IMR-90 (cell line): ENCODE measurements at regions of chr12 and their contacts with region 1.

Region 1: DNA sequence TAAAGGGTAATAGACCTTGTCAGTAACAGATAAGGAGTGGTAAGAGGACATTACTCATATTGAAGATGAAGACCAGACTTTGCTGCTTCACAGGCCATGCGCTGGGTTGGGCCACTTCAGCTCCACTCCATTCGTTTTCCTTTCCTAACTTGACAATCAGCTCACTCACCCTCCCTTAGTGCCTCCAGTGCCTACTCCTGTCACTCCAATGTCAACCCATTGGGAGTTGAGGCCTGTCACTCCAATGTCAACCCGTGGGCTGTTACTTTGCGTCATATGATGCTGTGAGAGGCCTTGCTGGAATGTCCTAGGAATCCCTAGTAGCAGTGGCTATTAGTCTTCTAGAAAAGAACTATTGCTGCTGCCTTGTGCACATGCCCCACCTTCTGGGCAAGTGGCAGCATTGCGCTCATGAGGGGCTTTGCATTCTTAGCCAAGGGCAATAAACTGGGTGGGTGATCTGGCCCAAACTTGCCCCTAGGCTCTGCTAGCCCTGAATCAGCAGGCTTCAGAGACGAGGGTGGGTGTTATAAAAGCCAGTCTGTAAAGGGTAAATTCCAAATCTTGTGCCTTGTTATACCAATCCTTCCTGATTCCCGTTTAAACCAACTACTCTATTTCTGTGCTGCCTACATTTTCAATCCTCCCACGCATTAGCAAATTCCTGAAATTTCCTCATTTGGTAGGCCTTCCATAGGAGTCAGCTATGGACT is 36.1 kb downstream of the BAZ2A start:
- DNase-seq: peak; percentile 81
- ATAC-seq: peak; percentile 81
- H3K4me3 ChIP-seq: no peak overlapping the region
- H3K27ac ChIP-seq: peak overlapping the region; percentile 23; the same call in 1 of the 2 replicates
- H3K4me1 ChIP-seq: peaks cover 19% of the 10 kb centered on the region
- H3K27me3 ChIP-seq: no peaks in the 10 kb centered on the region
- CTCF ChIP-seq: peak; percentile 90
- POLR2A ChIP-seq: 0 out of 2 replicates have a peak, but pooled peaks have one; percentile 41
- RAD21 ChIP-seq: peak; percentile 88

Region 2: GRCh38 chr12:55789171-55789570 is 804.9 kb before region 1 on chr12:
- CTCF ChIA-PET with region 1: no interaction called
- POLR2A ChIA-PET with region 1: no interaction called
- dilution Hi-C with region 1: no loop called
- in situ Hi-C with region 1: no loop called
- intact Hi-C with region 1: no loop called
- DNase-seq: no peak
- ATAC-seq: no peak
- H3K4me3 ChIP-seq: no peak overlapping the region
- H3K27ac ChIP-seq: no peak overlapping the region
- H3K4me1 ChIP-seq: no peaks in the 10 kb centered on the region
- H3K27me3 ChIP-seq: no peaks in the 10 kb centered on the region
- CTCF ChIP-seq: no peak
- POLR2A ChIP-seq: no peak
- RAD21 ChIP-seq: no peak

Region 3: DNA sequence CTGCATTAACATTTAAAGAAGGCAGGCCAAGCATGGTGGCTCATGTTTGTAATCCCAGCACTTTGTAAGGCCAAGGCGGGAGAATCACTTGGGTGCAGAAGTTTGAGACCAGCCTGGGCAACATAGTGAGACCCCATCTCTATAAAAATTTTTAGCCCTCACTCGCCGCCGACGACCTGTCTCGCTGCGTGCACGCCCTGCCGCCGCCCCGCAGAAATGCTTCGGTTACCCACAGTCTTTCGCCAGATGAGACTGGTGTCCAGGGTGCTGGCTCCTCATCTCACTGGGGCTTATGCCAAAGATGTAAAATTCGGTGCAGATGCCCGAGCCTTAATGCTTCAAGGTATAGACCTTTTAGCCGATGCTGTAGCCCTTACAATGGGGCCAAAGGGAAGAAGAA is 83.3 kb before region 1 on chr12:
- CTCF ChIA-PET with region 1: interaction called, 4 read pairs
- POLR2A ChIA-PET with region 1: interaction called, 3 read pairs
- dilution Hi-C with region 1: no loop called
- in situ Hi-C with region 1: loop called (anchors 5 kb)
- intact Hi-C with region 1: loop called (anchors 1 kb)
- DNase-seq: no peak
- ATAC-seq: no peak
- H3K4me3 ChIP-seq: no peak overlapping the region
- H3K27ac ChIP-seq: no peak overlapping the region
- H3K4me1 ChIP-seq: no peaks in the 10 kb centered on the region
- H3K27me3 ChIP-seq: no peaks in the 10 kb centered on the region; the same call in 1 of the 2 replicates
- CTCF ChIP-seq: no peak
- POLR2A ChIP-seq: no peak
- RAD21 ChIP-seq: no peak

Region 4: GRCh38 chr12:56636675-56637540 is 42.8 kb after region 1 on chr12:
- CTCF ChIA-PET with region 1: interaction called, 13 read pairs
- POLR2A ChIA-PET with region 1: no interaction called
- dilution Hi-C with region 1: no loop called
- in situ Hi-C with region 1: no loop called
- intact Hi-C with region 1: loop called (anchors 5 kb)
- DNase-seq: peak; percentile 100
- ATAC-seq: peak; percentile 81
- H3K4me3 ChIP-seq: peak overlapping the region; percentile 69
- H3K27ac ChIP-seq: peak overlapping the region; percentile 84
- H3K4me1 ChIP-seq: peaks cover 10% of the 10 kb centered on the region
- H3K27me3 ChIP-seq: no peaks in the 10 kb centered on the region
- CTCF ChIP-seq: peak; percentile 82
- POLR2A ChIP-seq: no peak
- RAD21 ChIP-seq: peak; percentile 79